Naive thymus-derived CD4-positive, alpha-beta T cell (primary cell): ENCODE measurements at regions of chr6 and their contacts with region 1.

Region 1: GRCh38 chr6:79536954-79537747 is at the start of gene LCA5:
- DNase-seq: peak; percentile 65 to 93 (median 89)
- ATAC-seq: peak; percentile 99
- H3K4me3 ChIP-seq: peak within 1 kb of the TSS; percentile 72
- H3K4me3 Mint-ChIP-seq: no peak within 1 kb of the TSS
- H3K27ac ChIP-seq: peak within 1 kb of the TSS; percentile 50
- H3K27ac Mint-ChIP-seq: no peak within 1 kb of the TSS
- H3K4me1 ChIP-seq: peaks cover 4 to 6% of the 10 kb centered on the region in 2 donors
- H3K4me1 Mint-ChIP-seq: peaks cover 0 to 7% (median 0%) of the 10 kb centered on the region in 7 donors
- H3K27me3 ChIP-seq: peaks cover 0 to 4% of the 10 kb centered on the region in 2 donors
- H3K27me3 Mint-ChIP-seq: peaks cover 0 to 20% (median 6%) of the 10 kb centered on the region in 5 donors
- total RNA-seq, gene LCA5: 0.10 to 0.65 (median 0.24) TPM

Region 2: GRCh38 chr6:78867370-78868040 is 669.6 kb before region 1 on chr6 and contains the start of gene IRAK1BP1:
- CTCF ChIA-PET with region 1: no interaction called
- POLR2A ChIA-PET with region 1: no interaction called
- intact Hi-C with region 1: loop called (anchors 1 to 2 kb)
- DNase-seq: peak; percentile 39 to 79 (median 76)
- ATAC-seq: peak; percentile 94
- H3K4me3 ChIP-seq: peak within 1 kb of the TSS; percentile 85
- H3K4me3 Mint-ChIP-seq: peak within 1 kb of the TSS; percentile 91 to 100 (median 98)
- H3K27ac ChIP-seq: peak within 1 kb of the TSS; percentile 68
- H3K27ac Mint-ChIP-seq: peak within 1 kb of the TSS; percentile 87 to 97 (median 96)
- H3K4me1 ChIP-seq: peaks cover 0 to 5% of the 10 kb centered on the region in 2 donors
- H3K4me1 Mint-ChIP-seq: peaks cover 6 to 33% (median 27%) of the 10 kb centered on the region in 7 donors
- H3K27me3 ChIP-seq: no peaks in the 10 kb centered on the region
- H3K27me3 Mint-ChIP-seq: no peaks in the 10 kb centered on the region
- total RNA-seq, gene IRAK1BP1: 0.71 to 3.6 (median 3.1) TPM

Region 3: DNA sequence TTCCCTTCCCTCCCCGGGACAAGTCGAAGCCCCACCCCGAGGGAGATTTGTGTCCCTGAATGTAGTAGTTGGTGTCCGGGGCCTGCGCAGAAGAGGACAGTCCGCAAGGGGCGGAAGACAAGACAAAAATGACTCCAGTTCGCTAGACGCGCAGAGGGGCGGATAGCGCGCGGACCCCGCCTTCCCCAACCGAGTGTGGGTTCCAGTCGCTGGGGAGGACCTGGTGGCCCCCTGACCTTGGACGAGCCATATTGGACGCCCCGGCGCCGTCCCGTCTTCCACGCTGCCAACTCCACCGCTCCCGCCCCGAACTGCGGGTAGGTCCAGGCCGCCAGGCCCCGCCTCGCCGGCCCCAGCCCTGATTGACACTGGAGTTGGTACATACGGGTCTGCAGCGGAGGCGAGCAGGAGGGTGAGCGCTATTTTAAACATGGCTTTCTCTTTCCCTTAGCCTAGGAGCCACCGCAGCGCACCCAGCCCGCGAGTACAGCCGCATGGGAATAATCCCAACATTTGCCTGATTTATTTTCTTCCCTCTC is 303.5 kb before region 1 on chr6:
- CTCF ChIA-PET with region 1: no interaction called
- POLR2A ChIA-PET with region 1: no interaction called
- intact Hi-C with region 1: loop called (anchors 1 kb)
- DNase-seq: peak; percentile 34 to 77 (median 54)
- ATAC-seq: peak; percentile 63
- H3K4me3 ChIP-seq: peak overlapping the region; percentile 89
- H3K4me3 Mint-ChIP-seq: peak overlapping the region; percentile 92 to 100 (median 98)
- H3K27ac ChIP-seq: peak overlapping the region; percentile 62
- H3K27ac Mint-ChIP-seq: peak overlapping the region; percentile 64 to 96 (median 90)
- H3K4me1 ChIP-seq: peaks cover 4 to 8% of the 10 kb centered on the region in 2 donors
- H3K4me1 Mint-ChIP-seq: peaks cover 9 to 42% (median 30%) of the 10 kb centered on the region in 7 donors
- H3K27me3 ChIP-seq: no peaks in the 10 kb centered on the region
- H3K27me3 Mint-ChIP-seq: no peaks in the 10 kb centered on the region

Region 4: GRCh38 chr6:79559706-79560105 is 22.6 kb after region 1 on chr6:
- CTCF ChIA-PET with region 1: no interaction called
- POLR2A ChIA-PET with region 1: no interaction called
- intact Hi-C with region 1: no loop called
- DNase-seq: no peak
- ATAC-seq: no peak
- H3K4me3 ChIP-seq: no peak overlapping the region
- H3K4me3 Mint-ChIP-seq: no peak overlapping the region
- H3K27ac ChIP-seq: no peak overlapping the region
- H3K27ac Mint-ChIP-seq: peak overlapping the region in 1 of 9 donors; percentile 6
- H3K4me1 ChIP-seq: no peaks in the 10 kb centered on the region
- H3K4me1 Mint-ChIP-seq: no peaks in the 10 kb centered on the region
- H3K27me3 ChIP-seq: no peaks in the 10 kb centered on the region
- H3K27me3 Mint-ChIP-seq: peaks cover 0 to 2% (median 0%) of the 10 kb centered on the region in 5 donors

Region 5: DNA sequence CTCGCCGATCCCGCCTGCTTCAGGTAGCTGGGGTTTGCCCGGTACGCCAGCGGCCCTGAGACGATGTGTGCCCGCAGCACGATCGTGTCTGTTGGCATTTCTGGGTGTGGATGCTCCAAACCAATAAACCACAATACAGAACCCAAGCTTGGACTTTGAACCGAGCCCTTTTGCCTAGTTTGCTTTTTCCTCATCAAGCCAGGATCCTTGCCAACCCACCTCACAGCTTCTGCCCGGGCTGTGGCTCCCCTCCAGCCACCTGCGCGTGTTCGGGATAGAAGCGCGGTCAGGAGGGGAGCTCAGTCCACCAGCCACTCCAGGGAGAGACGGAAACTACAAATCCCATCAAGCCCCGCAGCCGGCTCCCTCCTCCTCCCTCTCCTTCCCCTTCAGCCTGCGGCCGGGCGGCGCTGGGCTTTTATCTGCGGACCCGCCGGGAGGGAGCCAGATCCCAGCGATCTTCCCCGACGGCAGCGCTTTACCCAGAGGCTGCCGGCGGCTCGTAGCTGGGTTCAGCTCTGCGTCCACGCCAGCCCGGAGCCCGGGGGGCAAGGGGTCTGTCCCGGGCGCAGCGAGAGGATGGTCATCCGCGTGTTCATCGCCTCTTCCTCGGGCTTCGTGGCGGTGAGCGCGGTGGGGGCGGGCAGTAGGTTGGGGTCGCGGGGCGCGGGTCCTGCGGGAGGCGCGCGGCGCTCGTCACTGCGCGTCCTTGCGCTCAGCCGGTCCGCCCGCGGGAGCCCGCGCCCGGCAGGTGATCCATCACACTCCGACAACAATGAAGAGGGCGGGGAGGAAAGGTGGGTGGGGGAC is 93.9 kb after region 1 on chr6 and contains the start of gene SH3BGRL2:
- CTCF ChIA-PET with region 1: no interaction called
- POLR2A ChIA-PET with region 1: no interaction called
- intact Hi-C with region 1: loop called in 1 of 2 experiments (anchors 1 kb)
- DNase-seq: peak in 5 of 9 donors; percentile 10 to 22 (median 16)
- ATAC-seq: peak; percentile 67
- H3K4me3 ChIP-seq: peak within 1 kb of the TSS; percentile 51
- H3K4me3 Mint-ChIP-seq: peak within 1 kb of the TSS; percentile 79 to 93 (median 86)
- H3K27ac ChIP-seq: no peak within 1 kb of the TSS
- H3K27ac Mint-ChIP-seq: peak within 1 kb of the TSS in 1 of 9 donors; percentile 65
- H3K4me1 ChIP-seq: no peaks in the 10 kb centered on the region
- H3K4me1 Mint-ChIP-seq: peaks cover 6 to 16% (median 11%) of the 10 kb centered on the region in 7 donors
- H3K27me3 ChIP-seq: peaks cover 0 to 13% of the 10 kb centered on the region in 2 donors
- H3K27me3 Mint-ChIP-seq: peaks cover 26 to 68% (median 54%) of the 10 kb centered on the region in 5 donors
- total RNA-seq, gene SH3BGRL2: 0.17 to 2.9 (median 1.8) TPM

Region 6: GRCh38 chr6:79949233-79949632 is 412.1 kb after region 1 on chr6:
- CTCF ChIA-PET with region 1: no interaction called
- POLR2A ChIA-PET with region 1: no interaction called
- intact Hi-C with region 1: loop called in 1 of 2 experiments (anchors 1 kb)
- DNase-seq: peak in 8 of 9 donors; percentile 36 to 61 (median 44)
- ATAC-seq: peak; percentile 65
- H3K4me3 ChIP-seq: no peak overlapping the region
- H3K4me3 Mint-ChIP-seq: peak overlapping the region in 5 of 10 donors; percentile 10 to 55 (median 16)
- H3K27ac ChIP-seq: no peak overlapping the region
- H3K27ac Mint-ChIP-seq: peak overlapping the region in 1 of 9 donors; percentile 56
- H3K4me1 ChIP-seq: peaks cover 4 to 16% of the 10 kb centered on the region in 2 donors
- H3K4me1 Mint-ChIP-seq: peaks cover 13 to 25% (median 19%) of the 10 kb centered on the region in 7 donors
- H3K27me3 ChIP-seq: no peaks in the 10 kb centered on the region
- H3K27me3 Mint-ChIP-seq: peaks cover 32 to 57% (median 43%) of the 10 kb centered on the region in 5 donors